Panc1 (cell line): ENCODE measurements at regions of chr9 and their contacts with region 1.

Region 1: GRCh38 chr9:97598461-97599288 is 34.5 kb downstream of the TSTD2 start:
- DNase-seq: peak; percentile 50
- ATAC-seq: peak; percentile 94
- H3K4me3 ChIP-seq: no peak overlapping the region
- H3K27ac ChIP-seq: no peak overlapping the region
- H3K4me1 ChIP-seq: no peaks in the 10 kb centered on the region
- H3K27me3 ChIP-seq: no peaks in the 10 kb centered on the region
- CTCF ChIP-seq: peak; percentile 87

Region 2: GRCh38 chr9:96856363-96857286 is 742.0 kb before region 1 on chr9:
- CTCF ChIA-PET with region 1: interaction called, 13 read pairs
- POLR2A ChIA-PET with region 1: no interaction called
- in situ Hi-C with region 1: no loop called
- intact Hi-C with region 1: no loop called
- DNase-seq: peak; percentile 55
- ATAC-seq: peak; percentile 74
- H3K4me3 ChIP-seq: no peak overlapping the region
- H3K27ac ChIP-seq: no peak overlapping the region
- H3K4me1 ChIP-seq: peaks cover 9% of the 10 kb centered on the region
- H3K27me3 ChIP-seq: no peaks in the 10 kb centered on the region
- CTCF ChIP-seq: peak; percentile 87

Region 3: DNA sequence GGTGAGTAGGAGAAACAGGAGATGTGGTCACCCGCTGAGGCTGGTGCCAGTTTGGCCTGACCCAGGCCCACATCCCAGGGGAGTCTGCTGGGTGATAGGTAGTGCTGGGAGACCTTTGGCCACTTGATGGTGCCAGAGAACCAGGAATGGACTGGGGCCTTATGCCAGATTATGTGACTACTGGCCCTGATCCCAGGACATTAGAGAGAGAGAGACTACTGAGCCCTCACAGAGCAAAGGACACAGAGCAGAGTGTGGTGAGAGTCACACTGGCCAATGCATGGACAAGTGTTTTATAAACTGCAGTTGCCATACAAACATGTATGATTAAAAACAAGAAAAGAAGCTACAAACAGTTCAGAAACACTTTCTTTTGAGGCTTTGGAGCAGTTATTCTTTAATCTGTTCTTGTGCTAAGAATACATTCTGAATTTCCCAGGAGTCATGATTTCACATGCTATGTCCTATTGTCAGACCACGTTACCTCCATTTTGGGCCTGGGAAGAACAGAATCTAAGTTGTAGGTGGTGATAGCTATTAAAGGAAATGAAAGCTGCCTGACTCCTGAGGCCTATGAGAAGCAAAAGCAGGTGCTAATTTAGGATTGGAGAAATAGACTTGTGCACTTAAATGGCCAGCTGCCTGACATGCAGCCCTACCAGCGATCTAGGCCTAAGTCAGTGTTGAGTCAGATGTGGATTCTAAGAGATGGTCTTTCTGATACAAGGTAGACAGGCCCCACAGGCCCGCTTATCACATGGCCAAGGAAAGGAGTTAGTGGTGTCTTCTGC is 129.8 kb before region 1 on chr9:
- CTCF ChIA-PET with region 1: interaction called, 18 read pairs
- POLR2A ChIA-PET with region 1: no interaction called
- in situ Hi-C with region 1: no loop called
- intact Hi-C with region 1: loop called (anchors 2 kb)
- DNase-seq: peak; percentile 39
- ATAC-seq: peak; percentile 90
- H3K4me3 ChIP-seq: no peak overlapping the region
- H3K27ac ChIP-seq: no peak overlapping the region
- H3K4me1 ChIP-seq: no peaks in the 10 kb centered on the region
- H3K27me3 ChIP-seq: no peaks in the 10 kb centered on the region
- CTCF ChIP-seq: peak; percentile 70

Region 4: DNA sequence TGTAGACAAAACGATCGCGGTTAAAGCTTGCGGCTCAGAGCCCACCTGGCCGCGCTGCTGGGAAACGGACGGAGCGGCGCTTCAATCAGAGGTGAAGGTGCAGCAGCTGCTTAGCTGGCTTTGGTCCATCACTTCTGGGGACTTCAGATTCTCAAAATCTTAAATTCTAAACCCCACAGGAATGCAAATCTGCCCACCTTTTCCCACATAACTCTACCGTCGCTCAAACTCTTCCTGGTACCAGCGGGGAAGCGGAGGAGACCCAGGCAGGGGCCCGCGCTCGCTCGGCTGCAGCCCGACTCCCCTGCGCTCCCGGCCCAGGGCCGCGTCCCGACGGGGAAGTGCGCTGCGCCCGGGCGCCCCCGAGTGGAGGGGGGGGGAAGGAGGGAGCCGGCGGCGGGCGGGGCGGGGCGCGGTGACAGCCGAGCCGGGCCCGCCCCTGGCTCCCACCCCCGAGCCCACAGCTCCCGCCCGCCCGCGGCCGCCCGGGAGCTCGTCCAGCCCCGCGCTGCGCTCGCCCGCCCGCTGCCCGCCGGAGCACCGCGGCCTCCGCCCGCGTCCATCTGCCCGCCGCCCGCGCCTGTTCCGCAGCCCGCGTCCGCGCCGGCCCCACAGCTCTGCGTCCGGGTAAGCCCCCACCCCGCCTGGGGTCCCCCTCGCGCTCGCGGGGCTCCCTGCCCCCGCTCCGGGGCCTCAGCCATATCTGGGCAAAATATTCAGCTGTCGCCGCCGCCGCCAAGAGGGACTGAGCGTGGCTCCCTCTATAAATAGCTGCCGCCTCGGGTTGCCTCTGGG is 97.3 kb before region 1 on chr9 and contains the start of gene TMOD1:
- CTCF ChIA-PET with region 1: interaction called, 18 read pairs
- POLR2A ChIA-PET with region 1: no interaction called
- in situ Hi-C with region 1: no loop called
- intact Hi-C with region 1: no loop called
- DNase-seq: no peak
- ATAC-seq: peak; percentile 93
- H3K4me3 ChIP-seq: peak within 1 kb of the TSS; percentile 46 to 57
- H3K27ac ChIP-seq: no peak within 1 kb of the TSS
- H3K4me1 ChIP-seq: no peaks in the 10 kb centered on the region
- H3K27me3 ChIP-seq: peaks cover 5% of the 10 kb centered on the region
- CTCF ChIP-seq: peak; percentile 70
- total RNA-seq, gene TMOD1: 1.4 TPM

Region 5: DNA sequence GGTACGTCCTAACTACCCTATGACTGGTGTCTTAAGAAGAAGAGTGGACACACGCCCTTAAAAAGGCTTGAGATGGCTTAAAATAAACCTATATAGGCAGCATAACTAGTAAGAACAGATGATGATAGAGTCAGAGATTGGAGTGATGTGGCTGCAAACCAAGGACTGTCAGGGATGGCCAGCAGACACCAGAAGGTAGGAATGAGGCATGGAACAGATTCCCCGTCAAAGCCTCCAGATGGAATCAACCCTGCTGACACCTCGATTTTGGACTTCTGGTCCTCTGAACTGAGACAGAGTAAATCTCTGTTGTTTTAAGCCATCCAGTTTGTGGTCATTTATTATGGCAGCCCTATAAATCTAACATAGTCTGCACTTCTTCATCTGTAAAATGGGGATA is 89.8 kb before region 1 on chr9:
- CTCF ChIA-PET with region 1: interaction called, 13 read pairs
- POLR2A ChIA-PET with region 1: no interaction called
- in situ Hi-C with region 1: no loop called
- intact Hi-C with region 1: no loop called
- DNase-seq: no peak
- ATAC-seq: no peak
- H3K4me3 ChIP-seq: no peak overlapping the region
- H3K27ac ChIP-seq: no peak overlapping the region
- H3K4me1 ChIP-seq: peaks cover 9% of the 10 kb centered on the region; the same call in 1 of the 2 replicates
- H3K27me3 ChIP-seq: no peaks in the 10 kb centered on the region
- CTCF ChIP-seq: no peak